ENCODE measurements at regions of chr3 and their contacts with region 1.

Region 1: GRCh38 chr3:101836652-101837598 is 12.4 kb upstream of the NFKBIZ start:
- DNase-seq: no peak
- ATAC-seq: peak; percentile 35
- H3K4me3 ChIP-seq: peak overlapping the region; percentile 32; the same call in 1 of the 2 replicates
- H3K27ac ChIP-seq: 0 out of 2 replicates have a peak overlapping the region, but pooled peaks have one; percentile 27
- H3K4me1 ChIP-seq: peaks cover 40% of the 10 kb centered on the region
- H3K27me3 ChIP-seq: no peaks in the 10 kb centered on the region
- CTCF ChIP-seq: no peak
- EP300 ChIP-seq: peak in 1 of 2 experiments; percentile 19; a peak in 1 of 4 replicates
- POLR2A ChIP-seq: no peak
- RAD21 ChIP-seq: no peak

Region 2: GRCh38 chr3:101656651-101657050 is 180.3 kb before region 1 on chr3:
- CTCF ChIA-PET with region 1: no interaction called
- POLR2A ChIA-PET with region 1: no interaction called
- RAD21 ChIA-PET with region 1: no interaction called
- SMC1A ChIA-PET with region 1: no interaction called
- in situ Hi-C with region 1: no loop called
- intact Hi-C with region 1: no loop called
- DNase-seq: no peak
- ATAC-seq: no peak
- H3K4me3 ChIP-seq: no peak overlapping the region
- H3K27ac ChIP-seq: no peak overlapping the region
- H3K4me1 ChIP-seq: no peaks in the 10 kb centered on the region
- H3K27me3 ChIP-seq: no peaks in the 10 kb centered on the region
- CTCF ChIP-seq: no peak
- EP300 ChIP-seq: no peak
- POLR2A ChIP-seq: no peak
- RAD21 ChIP-seq: no peak

Region 3: GRCh38 chr3:101854621-101855304 is 17.8 kb after region 1 on chr3:
- CTCF ChIA-PET with region 1: interaction called, 7 read pairs
- POLR2A ChIA-PET with region 1: interaction called, 66 read pairs
- RAD21 ChIA-PET with region 1: interaction called, 44 read pairs
- SMC1A ChIA-PET with region 1: interaction called, 61 read pairs
- in situ Hi-C with region 1: no loop called
- intact Hi-C with region 1: no loop called
- DNase-seq: no peak
- ATAC-seq: no peak
- H3K4me3 ChIP-seq: no peak overlapping the region
- H3K27ac ChIP-seq: no peak overlapping the region
- H3K4me1 ChIP-seq: peaks cover 17% of the 10 kb centered on the region
- H3K27me3 ChIP-seq: no peaks in the 10 kb centered on the region
- CTCF ChIP-seq: no peak
- EP300 ChIP-seq: no peak
- POLR2A ChIP-seq: no peak
- RAD21 ChIP-seq: no peak